ENCODE measurements at regions of chr6 and their contacts with region 1.

Region 1: GRCh38 chr6:153231048-153231646 is 100.1 kb upstream of the RGS17 start:
- DNase-seq: peak; percentile 18
- H3K4me3 Mint-ChIP-seq: no peak overlapping the region
- H3K27ac Mint-ChIP-seq: no peak overlapping the region
- H3K4me1 Mint-ChIP-seq: no peaks in the 10 kb centered on the region
- H3K27me3 Mint-ChIP-seq: peaks cover 2% of the 10 kb centered on the region

Region 2: GRCh38 chr6:153272201-153272980 is 41.2 kb after region 1 on chr6:
- intact Hi-C with region 1: no loop called
- DNase-seq: no peak
- H3K4me3 Mint-ChIP-seq: no peak overlapping the region
- H3K27ac Mint-ChIP-seq: no peak overlapping the region
- H3K4me1 Mint-ChIP-seq: no peaks in the 10 kb centered on the region
- H3K27me3 Mint-ChIP-seq: no peaks in the 10 kb centered on the region

Region 3: DNA sequence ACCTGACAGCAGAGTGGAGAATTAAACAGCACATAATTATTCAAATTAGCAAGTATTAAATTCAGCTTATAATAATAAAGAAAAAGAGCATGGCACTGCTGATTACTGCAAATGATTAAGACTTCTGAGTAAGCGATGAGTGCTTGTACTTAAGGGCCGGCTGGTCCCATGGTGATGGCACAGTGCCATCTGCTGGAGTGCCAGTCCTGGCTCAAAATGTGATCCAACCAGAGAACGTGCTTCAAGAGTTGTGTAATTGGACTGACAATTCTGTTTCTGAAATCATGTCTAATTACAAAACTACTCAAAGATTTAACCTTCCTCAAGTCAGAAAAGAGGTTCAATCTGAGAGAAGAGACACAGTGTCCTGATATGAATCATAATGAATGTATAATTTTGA is 81.5 kb after region 1 on chr6:
- intact Hi-C with region 1: loop called (anchors 2 kb)
- DNase-seq: no peak
- H3K4me3 Mint-ChIP-seq: no peak overlapping the region
- H3K27ac Mint-ChIP-seq: no peak overlapping the region
- H3K4me1 Mint-ChIP-seq: no peaks in the 10 kb centered on the region
- H3K27me3 Mint-ChIP-seq: peaks cover 2% of the 10 kb centered on the region

Region 4: DNA sequence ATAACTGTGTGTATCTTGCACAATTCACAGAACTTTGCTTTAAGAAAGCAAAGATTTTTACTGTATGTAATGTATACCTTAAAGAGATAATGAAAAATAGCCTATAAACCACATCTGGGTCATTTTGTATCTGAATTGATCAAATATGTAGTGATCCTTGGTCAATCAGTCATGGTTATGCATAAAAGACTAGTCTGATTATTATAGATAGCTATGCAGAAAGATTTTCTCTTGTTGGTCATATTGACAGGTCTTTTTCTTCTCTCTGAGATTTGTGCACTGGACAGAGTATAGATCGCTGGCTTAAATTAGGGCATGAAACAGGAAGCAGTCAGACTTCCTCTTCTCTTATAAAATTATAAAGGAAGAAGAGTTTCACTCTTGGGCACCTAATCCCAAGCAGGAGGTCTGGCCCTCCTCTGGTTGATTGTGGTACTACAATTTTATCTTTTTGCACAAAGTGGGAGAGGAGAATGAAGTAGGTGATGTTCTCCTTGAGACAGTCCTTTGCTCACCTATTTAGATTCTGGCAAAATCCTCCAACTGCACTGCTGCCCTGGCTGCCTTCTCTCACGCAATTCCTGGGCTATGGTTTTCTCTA is 280.8 kb after region 1 on chr6:
- intact Hi-C with region 1: loop called (anchors 1 kb)
- DNase-seq: no peak
- H3K4me3 Mint-ChIP-seq: no peak overlapping the region
- H3K27ac Mint-ChIP-seq: no peak overlapping the region
- H3K4me1 Mint-ChIP-seq: no peaks in the 10 kb centered on the region
- H3K27me3 Mint-ChIP-seq: no peaks in the 10 kb centered on the region

Region 5: DNA sequence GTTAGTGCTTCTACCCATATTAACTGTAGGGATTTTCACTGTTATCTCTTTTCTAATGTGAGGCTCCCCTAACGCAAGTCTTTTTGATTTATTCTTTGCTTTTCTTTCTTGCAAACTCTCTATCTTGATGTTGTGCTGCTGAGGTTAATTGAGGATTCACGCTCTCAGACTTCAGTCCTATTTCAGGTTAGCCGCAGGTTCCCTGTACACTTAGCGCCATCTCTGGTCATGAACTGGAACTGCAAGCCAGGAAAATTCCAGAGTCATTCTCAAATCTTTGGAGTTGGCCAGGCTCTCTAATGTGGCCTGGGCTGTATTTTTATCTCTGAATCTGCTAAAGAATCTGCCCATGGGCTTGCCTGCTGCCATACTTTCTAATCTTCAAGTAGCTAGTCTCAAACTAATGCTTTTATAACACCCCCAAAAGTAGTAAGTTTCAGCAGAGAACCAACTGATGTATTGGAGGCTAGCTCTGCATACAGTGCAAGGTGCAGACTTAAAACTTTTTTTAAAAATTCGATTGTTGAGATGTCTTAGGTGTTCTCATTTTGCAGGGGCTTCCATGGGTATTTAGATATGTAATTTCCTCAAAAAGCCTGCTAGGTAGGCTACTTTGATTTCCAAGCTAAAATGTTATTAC is 716.8 kb after region 1 on chr6:
- intact Hi-C with region 1: loop called (anchors 5 kb)
- DNase-seq: no peak
- H3K4me3 Mint-ChIP-seq: no peak overlapping the region
- H3K27ac Mint-ChIP-seq: no peak overlapping the region
- H3K4me1 Mint-ChIP-seq: no peaks in the 10 kb centered on the region
- H3K27me3 Mint-ChIP-seq: no peaks in the 10 kb centered on the region

Measured in activated T-helper 2 cell treated with anti-CD3 and anti-CD28 coated beads, Interferon-gamma antibody, Interleukin-2, Interleukin-4, amounts not matched to agents 10 μg/mL and 5 μg/mL and 100 μg/mL, durations not matched to agents 14 hours and 24 hours and 36 hours (primary cell).